ENCODE measurements at regions of chr5 and their contacts with region 1.

Region 1: GRCh38 chr5:88660947-88661805 is 221.8 kb downstream of the MEF2C start:
- DNase-seq: peak; percentile 95 to 99 (median 98)

Region 2: DNA sequence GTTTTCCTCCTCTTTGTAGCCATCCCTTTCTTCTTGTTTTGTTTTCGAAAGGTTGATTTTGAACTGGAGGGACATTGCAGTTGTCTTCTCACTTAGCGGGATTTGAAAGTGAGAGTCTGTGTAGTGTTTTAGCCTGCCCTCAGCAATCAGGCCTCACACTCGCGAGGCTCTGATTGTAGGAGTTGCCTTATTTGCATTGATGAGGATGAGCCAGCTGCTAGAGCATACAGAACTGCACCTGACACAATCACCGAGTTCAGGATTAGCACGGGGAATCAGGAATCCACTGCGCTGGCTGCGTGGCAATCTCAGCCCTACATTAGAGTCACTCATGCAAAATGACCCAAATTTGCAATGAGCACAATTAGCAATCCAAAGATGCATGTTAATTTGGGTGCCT is 270.1 kb before region 1 on chr5:
- intact Hi-C with region 1: loop called (anchors 2 kb)
- DNase-seq: peak in 35 of 42 donors; percentile 15 to 81 (median 54)

Region 3: DNA sequence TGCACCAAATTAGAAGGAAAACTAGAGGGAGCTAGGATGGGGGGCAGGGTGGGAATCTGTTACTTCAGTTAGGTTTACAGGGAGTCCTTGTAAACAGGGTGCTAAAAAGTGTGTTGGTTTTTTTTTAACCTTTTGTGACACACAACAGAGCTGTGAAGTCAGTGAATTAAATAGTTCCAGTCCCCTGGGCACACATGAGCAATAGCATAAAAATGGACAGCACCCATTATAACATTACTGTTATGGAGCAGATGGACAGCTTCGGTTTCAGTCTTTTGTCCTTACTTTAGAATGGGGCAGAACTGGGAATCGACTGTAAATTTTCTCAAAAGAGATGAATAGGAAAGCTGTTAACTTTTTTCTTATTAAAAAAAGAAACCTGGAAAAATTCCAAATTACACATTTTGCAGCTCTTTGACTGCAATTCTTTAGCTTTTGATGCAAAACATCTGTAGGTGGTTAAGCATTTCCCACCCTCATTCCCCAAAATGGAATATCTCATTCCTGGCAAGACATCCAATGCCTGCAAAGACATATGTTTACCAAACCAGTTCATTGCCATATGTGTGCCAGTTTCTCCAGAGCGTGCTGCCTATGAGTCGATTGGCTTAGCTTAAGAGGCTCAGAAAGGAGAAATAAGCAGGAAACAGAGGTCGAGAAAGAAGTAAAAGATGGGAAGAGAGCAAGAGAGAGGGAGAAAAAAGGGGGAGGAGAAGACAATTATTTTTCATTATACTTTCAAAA is 180.2 kb before region 1 on chr5:
- intact Hi-C with region 1: loop called (anchors 10 kb)
- DNase-seq: no peak

Region 4: GRCh38 chr5:88870285-88870684 is 209.1 kb after region 1 on chr5:
- intact Hi-C with region 1: no loop called
- DNase-seq: no peak

Measured in head of caudate nucleus (tissue), 42 donors.